H1 (cell line): ENCODE measurements at regions of chr15 and their contacts with region 1.

Region 1: DNA sequence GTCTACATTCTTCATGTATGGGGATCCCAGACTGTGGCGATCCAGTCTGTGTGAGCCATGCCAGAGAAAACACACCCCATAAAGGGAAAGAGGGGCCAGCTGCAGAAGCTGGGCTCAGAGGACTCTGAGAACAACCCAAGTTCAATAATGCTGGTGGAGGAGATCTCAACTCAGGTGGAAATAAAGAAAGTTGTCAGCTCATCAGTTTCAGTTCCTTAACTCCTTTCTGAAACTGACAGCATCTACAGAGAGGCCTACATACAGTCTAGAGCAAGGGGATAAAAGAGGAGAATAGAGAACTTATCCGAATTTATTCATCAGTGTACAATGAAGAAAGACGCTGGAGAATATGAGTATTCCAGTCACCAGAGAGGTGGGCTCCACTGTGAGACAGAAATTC is 77.0 kb downstream of the NTRK3 start:
- DNase-seq: no peak
- H3K4me3 ChIP-seq: no peak overlapping the region
- H3K27ac ChIP-seq: no peak overlapping the region
- H3K4me1 ChIP-seq: no peaks in the 10 kb centered on the region
- H3K27me3 ChIP-seq: no peaks in the 10 kb centered on the region
- CTCF ChIP-seq: no peak
- EP300 ChIP-seq: no peak
- POLR2A ChIP-seq: no peak
- RAD21 ChIP-seq: no peak

Region 2: GRCh38 chr15:88193415-88193814 is 13.9 kb after region 1 on chr15:
- CTCF ChIA-PET with region 1: interaction called, 15 read pairs
- POLR2A ChIA-PET with region 1: no interaction called
- DNase-seq: no peak
- H3K4me3 ChIP-seq: no peak overlapping the region
- H3K27ac ChIP-seq: no peak overlapping the region
- H3K4me1 ChIP-seq: peaks cover 0 to 3% (median 1%) of the 10 kb centered on the region in 4 experiments; a peak in 2 of 7 replicates
- H3K27me3 ChIP-seq: no peaks in the 10 kb centered on the region
- CTCF ChIP-seq: peak in 2 of 3 experiments; percentile 8 to 37; a peak in 1 of 4 replicates
- EP300 ChIP-seq: no peak
- POLR2A ChIP-seq: no peak
- RAD21 ChIP-seq: no peak; a peak in 1 of 4 replicates